AG04450 (cell line): ENCODE measurements at regions of chr22 and their contacts with region 1.

Region 1: DNA sequence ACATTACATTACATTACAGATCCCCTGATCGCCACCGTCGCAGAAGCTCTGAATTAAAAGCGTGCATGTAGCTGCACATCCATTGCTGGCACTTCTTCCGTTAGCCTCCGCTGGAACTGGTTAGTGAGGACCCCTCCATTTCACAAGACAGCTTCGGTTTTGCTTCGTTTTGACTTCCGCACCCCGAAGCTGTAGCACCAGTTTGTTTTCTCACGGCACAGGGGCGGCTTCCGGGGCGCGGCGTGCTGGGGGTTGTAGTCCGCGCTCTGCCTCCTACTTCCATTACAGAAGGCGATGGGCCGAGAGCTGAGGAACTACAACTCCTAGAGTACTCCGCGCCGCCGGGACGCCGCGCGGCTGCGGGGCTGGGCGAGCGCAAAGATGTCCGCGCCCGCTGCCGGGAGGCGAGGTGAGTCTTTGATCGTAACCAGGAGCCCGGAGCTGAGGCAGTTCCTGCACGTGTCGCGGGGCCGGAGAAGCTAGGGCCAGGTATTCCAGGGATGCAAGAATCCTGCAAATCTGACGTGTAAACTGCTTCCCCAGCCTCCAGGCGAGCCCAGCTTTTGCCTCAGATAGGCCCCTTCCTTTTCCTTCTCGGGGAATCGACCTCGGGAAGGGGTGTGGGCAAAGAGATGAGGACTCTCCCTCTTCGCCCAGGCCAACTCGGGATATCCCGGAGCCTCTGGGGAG is at the start of gene PEX26:
- DNase-seq: peak; percentile 86
- H3K4me3 ChIP-seq: peak within 1 kb of the TSS; percentile 100
- H3K27ac ChIP-seq: peak within 1 kb of the TSS; percentile 57
- H3K27me3 ChIP-seq: no peaks in the 10 kb centered on the region
- CTCF ChIP-seq: no peak
- polyA plus RNA-seq, gene PEX26: 20.8 and 24.8 TPM in 2 replicates

Region 2: GRCh38 chr22:17830043-17830961 is 247.5 kb before region 1 on chr22:
- CTCF ChIA-PET with region 1: interaction called, 226 read pairs
- POLR2A ChIA-PET with region 1: interaction called, 5 read pairs
- DNase-seq: peak; percentile 37
- H3K4me3 ChIP-seq: no peak overlapping the region
- H3K27ac ChIP-seq: no peak overlapping the region
- H3K27me3 ChIP-seq: no peaks in the 10 kb centered on the region
- CTCF ChIP-seq: peak; percentile 100

Region 3: GRCh38 chr22:17891481-17892167 is 186.2 kb before region 1 on chr22:
- CTCF ChIA-PET with region 1: interaction called, 70 read pairs
- POLR2A ChIA-PET with region 1: no interaction called
- DNase-seq: no peak
- H3K4me3 ChIP-seq: no peak overlapping the region
- H3K27ac ChIP-seq: no peak overlapping the region
- H3K27me3 ChIP-seq: no peaks in the 10 kb centered on the region
- CTCF ChIP-seq: no peak

Region 4: GRCh38 chr22:17954321-17955197 is 123.2 kb before region 1 on chr22:
- CTCF ChIA-PET with region 1: interaction called, 14 read pairs
- POLR2A ChIA-PET with region 1: no interaction called
- DNase-seq: no peak
- H3K4me3 ChIP-seq: no peak overlapping the region
- H3K27ac ChIP-seq: no peak overlapping the region
- H3K27me3 ChIP-seq: no peaks in the 10 kb centered on the region
- CTCF ChIP-seq: no peak

Region 5: GRCh38 chr22:18031695-18032454 is 45.9 kb before region 1 on chr22:
- CTCF ChIA-PET with region 1: interaction called, 25 read pairs
- POLR2A ChIA-PET with region 1: interaction called, 3 read pairs
- DNase-seq: peak; percentile 86
- H3K4me3 ChIP-seq: no peak overlapping the region
- H3K27ac ChIP-seq: peak overlapping the region; percentile 88
- H3K27me3 ChIP-seq: no peaks in the 10 kb centered on the region
- CTCF ChIP-seq: no peak